ENCODE measurements at regions of chr7 and their contacts with region 1.

Region 1: DNA sequence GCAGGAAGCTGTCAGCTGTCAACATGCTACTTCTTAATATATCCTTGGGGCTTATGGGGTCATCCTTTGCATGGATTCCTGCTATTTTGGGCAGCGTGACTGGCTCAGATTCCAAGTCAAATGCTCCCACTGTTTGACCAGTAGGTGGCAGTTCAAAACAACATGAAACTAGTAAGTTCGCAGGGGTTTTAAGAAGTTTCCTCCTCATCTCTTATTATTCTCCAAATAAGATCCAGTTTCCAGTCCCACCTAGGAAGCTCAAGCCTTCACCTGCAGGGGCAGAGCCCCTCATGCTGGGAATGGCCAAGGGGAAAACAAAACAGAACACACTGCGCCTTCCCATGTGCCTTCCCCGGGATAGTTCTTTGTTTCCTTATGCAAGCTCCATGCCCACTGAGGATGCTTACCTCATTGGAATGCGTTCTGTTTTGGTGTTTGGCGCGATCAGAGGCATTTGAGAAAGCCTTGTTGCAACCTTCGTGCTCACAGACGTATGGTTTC is 259.8 kb downstream of the GLI3 start:
- DNase-seq: no peak
- ATAC-seq: peak; percentile 60
- H3K4me3 ChIP-seq: no peak overlapping the region
- H3K27ac ChIP-seq: no peak overlapping the region
- H3K4me1 ChIP-seq: no peaks in the 10 kb centered on the region
- H3K27me3 ChIP-seq: no peaks in the 10 kb centered on the region

Region 2: GRCh38 chr7:41134300-41135250 is 842.6 kb before region 1 on chr7:
- intact Hi-C with region 1: no loop called
- DNase-seq: no peak
- ATAC-seq: no peak
- H3K4me3 ChIP-seq: no peak overlapping the region
- H3K27ac ChIP-seq: no peak overlapping the region
- H3K4me1 ChIP-seq: no peaks in the 10 kb centered on the region
- H3K27me3 ChIP-seq: no peaks in the 10 kb centered on the region

Region 3: GRCh38 chr7:41870461-41871138 is 106.6 kb before region 1 on chr7:
- intact Hi-C with region 1: no loop called
- DNase-seq: no peak
- ATAC-seq: no peak
- H3K4me3 ChIP-seq: no peak overlapping the region
- H3K27ac ChIP-seq: no peak overlapping the region
- H3K4me1 ChIP-seq: peaks cover 0 to 8% of the 10 kb centered on the region in 2 donors
- H3K27me3 ChIP-seq: no peaks in the 10 kb centered on the region

Region 4: DNA sequence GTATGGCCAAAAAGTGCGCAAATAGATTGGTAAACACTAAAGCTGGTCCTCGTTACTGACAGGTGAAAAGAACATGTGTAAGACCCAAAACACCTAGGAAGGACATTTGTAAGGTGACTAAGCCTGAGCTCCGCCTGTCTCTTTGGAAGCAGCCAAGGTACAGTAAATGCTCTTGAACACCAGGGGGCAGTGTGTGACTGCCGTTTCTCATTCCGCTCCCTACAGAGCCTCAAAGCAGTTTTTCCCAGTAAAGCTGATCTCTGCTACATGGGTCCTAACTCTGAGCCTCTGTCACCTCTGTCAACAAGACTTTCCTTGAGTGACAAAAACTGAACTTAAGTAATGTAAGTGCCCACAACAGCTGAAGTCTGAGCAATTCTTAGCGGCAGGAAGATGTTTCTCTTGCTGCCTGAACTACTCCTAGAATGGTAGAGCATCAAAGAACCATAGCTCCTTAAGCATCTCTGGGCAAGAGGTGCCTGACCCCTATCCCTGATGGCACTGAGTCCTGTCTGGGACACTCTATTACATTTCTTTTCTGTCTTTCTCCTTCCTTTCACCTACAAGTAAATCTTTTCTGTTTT is 36.3 kb before region 1 on chr7:
- intact Hi-C with region 1: loop called in 1 of 2 experiments (anchors 2 kb)
- DNase-seq: peak; percentile 71 to 85
- ATAC-seq: peak; percentile 89
- H3K4me3 ChIP-seq: no peak overlapping the region
- H3K27ac ChIP-seq: no peak overlapping the region
- H3K4me1 ChIP-seq: no peaks in the 10 kb centered on the region
- H3K27me3 ChIP-seq: no peaks in the 10 kb centered on the region

Region 5: DNA sequence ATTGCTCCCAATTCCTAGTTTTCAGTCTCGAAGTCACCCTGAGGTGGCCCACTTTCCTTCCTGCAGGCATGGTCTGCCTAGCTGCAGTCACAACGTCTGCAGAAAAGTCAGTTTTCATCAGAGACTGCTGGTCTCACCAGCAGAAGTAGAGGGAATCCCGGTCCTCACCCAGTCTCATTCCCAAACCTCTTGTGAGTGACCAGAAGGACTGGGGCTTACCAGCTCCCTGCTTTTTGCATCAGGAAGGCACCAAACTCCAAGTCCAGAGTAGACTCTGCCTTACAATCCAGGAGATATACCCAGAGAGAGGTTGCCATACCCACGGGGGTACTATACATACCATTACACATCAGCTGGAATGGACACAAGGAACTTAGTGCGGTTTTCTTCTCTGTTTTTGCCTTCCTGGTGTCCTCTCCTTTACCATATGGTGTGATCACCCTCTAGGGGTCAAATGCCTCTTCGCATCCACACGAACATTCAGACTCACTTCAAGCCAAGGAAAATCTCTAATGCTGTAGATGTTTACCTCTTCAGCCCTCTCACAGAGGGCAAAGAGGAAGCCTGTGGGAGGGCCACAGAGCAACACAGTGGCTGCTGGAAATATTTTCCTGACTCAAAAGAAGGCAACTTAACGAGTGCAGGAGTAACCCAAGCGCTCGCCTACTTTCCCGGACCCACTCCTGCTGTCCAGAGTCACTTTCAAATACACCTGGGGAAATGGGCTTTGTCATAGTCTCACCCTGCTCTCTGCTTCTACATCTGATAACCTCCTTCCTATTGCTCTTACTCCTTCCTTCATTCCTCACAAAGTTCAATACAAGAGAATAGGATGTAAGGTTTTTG is 713.8 kb after region 1 on chr7:
- intact Hi-C with region 1: loop called (anchors 5 to 10 kb)
- DNase-seq: no peak
- ATAC-seq: peak; percentile 21
- H3K4me3 ChIP-seq: no peak overlapping the region
- H3K27ac ChIP-seq: no peak overlapping the region
- H3K4me1 ChIP-seq: peaks cover 0 to 4% of the 10 kb centered on the region in 2 donors
- H3K27me3 ChIP-seq: no peaks in the 10 kb centered on the region

Region 6: GRCh38 chr7:42831718-42832431 is 854.7 kb after region 1 on chr7:
- intact Hi-C with region 1: loop called in 1 of 2 experiments (anchors 5 kb)
- DNase-seq: peak; percentile 50 to 71
- ATAC-seq: peak; percentile 72
- H3K4me3 ChIP-seq: no peak overlapping the region
- H3K27ac ChIP-seq: no peak overlapping the region
- H3K4me1 ChIP-seq: no peaks in the 10 kb centered on the region
- H3K27me3 ChIP-seq: no peaks in the 10 kb centered on the region

Region 7: GRCh38 chr7:42843205-42843800 is 866.1 kb after region 1 on chr7:
- intact Hi-C with region 1: loop called in 1 of 2 experiments (anchors 10 kb)
- DNase-seq: no peak
- ATAC-seq: peak; percentile 86
- H3K4me3 ChIP-seq: no peak overlapping the region
- H3K27ac ChIP-seq: no peak overlapping the region
- H3K4me1 ChIP-seq: no peaks in the 10 kb centered on the region
- H3K27me3 ChIP-seq: no peaks in the 10 kb centered on the region